ENCODE measurements at regions of chr7 and their contacts with region 1.

Region 1: DNA sequence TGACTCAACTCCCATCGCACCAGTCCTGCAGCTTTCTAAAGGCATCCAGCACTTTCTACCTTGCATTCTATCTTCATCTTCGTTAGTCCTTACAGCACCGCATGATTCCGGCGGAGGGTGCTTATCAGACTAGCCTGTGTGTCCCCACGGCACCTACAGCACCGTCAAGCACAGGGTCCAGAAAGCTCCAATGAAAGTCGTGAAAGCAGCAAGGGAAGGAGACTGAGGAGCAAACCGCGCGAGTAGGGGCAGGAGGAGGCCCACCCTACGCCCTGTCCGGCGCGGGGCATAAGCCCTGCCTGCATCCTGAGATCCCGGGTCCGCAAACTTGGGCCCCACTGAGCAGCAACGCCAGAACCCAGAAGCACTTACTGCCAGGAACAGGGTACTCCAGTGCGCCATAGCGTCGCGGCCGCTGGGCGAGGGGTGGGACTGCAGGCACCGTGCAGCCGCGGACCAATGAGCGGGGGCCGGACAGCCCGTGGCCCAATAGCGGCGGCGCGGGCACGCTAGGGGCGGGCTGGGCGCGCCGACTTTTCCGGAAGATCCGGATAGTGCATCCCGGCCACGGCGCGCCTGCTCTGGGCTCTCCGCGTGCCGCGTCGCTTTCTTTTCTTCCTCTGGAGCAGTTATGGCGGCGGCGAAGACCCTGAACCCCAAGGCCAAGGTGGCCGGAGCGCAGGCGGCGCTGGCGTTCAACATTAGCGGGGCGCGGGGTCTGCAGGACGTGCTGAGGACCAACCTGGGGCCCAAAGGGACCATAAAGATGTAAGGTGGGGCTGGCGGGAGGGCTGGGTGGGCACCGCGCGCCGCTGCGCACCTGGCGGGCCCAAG is 122.1 kb upstream of the VKORC1L1 start:
- DNase-seq: peak; percentile 76 to 91 (median 80)
- ATAC-seq: peak; percentile 99
- H3K4me3 ChIP-seq: peak overlapping the region; percentile 97
- H3K4me3 Mint-ChIP-seq: peak overlapping the region; percentile 90 to 100 (median 98)
- H3K27ac ChIP-seq: peak overlapping the region; percentile 85
- H3K27ac Mint-ChIP-seq: peak overlapping the region; percentile 75 to 95 (median 87)
- H3K4me1 ChIP-seq: peaks cover 6 to 7% of the 10 kb centered on the region in 2 donors
- H3K4me1 Mint-ChIP-seq: peaks cover 0 to 35% (median 20%) of the 10 kb centered on the region in 7 donors
- H3K27me3 ChIP-seq: no peaks in the 10 kb centered on the region
- H3K27me3 Mint-ChIP-seq: no peaks in the 10 kb centered on the region

Region 2: GRCh38 chr7:65373608-65374351 is 376.9 kb before region 1 on chr7 and contains the start of gene ZNF92:
- CTCF ChIA-PET with region 1: no interaction called
- POLR2A ChIA-PET with region 1: interaction called, 3 read pairs
- intact Hi-C with region 1: loop called (anchors 5 kb)
- DNase-seq: peak; percentile 84 to 95 (median 94)
- ATAC-seq: peak; percentile 99
- H3K4me3 ChIP-seq: peak within 1 kb of the TSS; percentile 87
- H3K4me3 Mint-ChIP-seq: peak within 1 kb of the TSS; percentile 90 to 98 (median 96)
- H3K27ac ChIP-seq: peak within 1 kb of the TSS; percentile 82
- H3K27ac Mint-ChIP-seq: peak within 1 kb of the TSS; percentile 87 to 96 (median 93)
- H3K4me1 ChIP-seq: peaks cover 8 to 21% of the 10 kb centered on the region in 2 donors
- H3K4me1 Mint-ChIP-seq: peaks cover 18 to 57% (median 49%) of the 10 kb centered on the region in 7 donors
- H3K27me3 ChIP-seq: no peaks in the 10 kb centered on the region
- H3K27me3 Mint-ChIP-seq: no peaks in the 10 kb centered on the region
- total RNA-seq, gene ZNF92: 16.3 to 22.5 (median 19.3) TPM

Region 3: GRCh38 chr7:65938336-65938895 is 187.7 kb after region 1 on chr7:
- CTCF ChIA-PET with region 1: no interaction called
- POLR2A ChIA-PET with region 1: no interaction called
- intact Hi-C with region 1: no loop called
- DNase-seq: no peak
- ATAC-seq: no peak
- H3K4me3 ChIP-seq: no peak overlapping the region
- H3K4me3 Mint-ChIP-seq: no peak overlapping the region
- H3K27ac ChIP-seq: no peak overlapping the region
- H3K27ac Mint-ChIP-seq: no peak overlapping the region
- H3K4me1 ChIP-seq: no peaks in the 10 kb centered on the region
- H3K4me1 Mint-ChIP-seq: peaks cover 0 to 8% (median 3%) of the 10 kb centered on the region in 7 donors
- H3K27me3 ChIP-seq: no peaks in the 10 kb centered on the region
- H3K27me3 Mint-ChIP-seq: no peaks in the 10 kb centered on the region

Region 4: GRCh38 chr7:66075590-66076461 is 325.1 kb after region 1 on chr7 and contains the start of gene ASL:
- CTCF ChIA-PET with region 1: no interaction called
- POLR2A ChIA-PET with region 1: no interaction called
- intact Hi-C with region 1: loop called (anchors 5 to 10 kb)
- DNase-seq: peak; percentile 71 to 96 (median 78)
- ATAC-seq: peak; percentile 99
- H3K4me3 ChIP-seq: peak within 1 kb of the TSS; percentile 83
- H3K4me3 Mint-ChIP-seq: peak within 1 kb of the TSS; percentile 80 to 96 (median 87)
- H3K27ac ChIP-seq: peak within 1 kb of the TSS; percentile 69
- H3K27ac Mint-ChIP-seq: peak within 1 kb of the TSS in 8 of 9 donors; percentile 42 to 89 (median 77)
- H3K4me1 ChIP-seq: peaks cover 6 to 7% of the 10 kb centered on the region in 2 donors
- H3K4me1 Mint-ChIP-seq: peaks cover 5 to 20% (median 19%) of the 10 kb centered on the region in 7 donors
- H3K27me3 ChIP-seq: no peaks in the 10 kb centered on the region
- H3K27me3 Mint-ChIP-seq: peaks cover 0 to 2% (median 0%) of the 10 kb centered on the region in 5 donors
- total RNA-seq, gene ASL: 11.3 to 29.7 (median 12.8) TPM

Region 5: DNA sequence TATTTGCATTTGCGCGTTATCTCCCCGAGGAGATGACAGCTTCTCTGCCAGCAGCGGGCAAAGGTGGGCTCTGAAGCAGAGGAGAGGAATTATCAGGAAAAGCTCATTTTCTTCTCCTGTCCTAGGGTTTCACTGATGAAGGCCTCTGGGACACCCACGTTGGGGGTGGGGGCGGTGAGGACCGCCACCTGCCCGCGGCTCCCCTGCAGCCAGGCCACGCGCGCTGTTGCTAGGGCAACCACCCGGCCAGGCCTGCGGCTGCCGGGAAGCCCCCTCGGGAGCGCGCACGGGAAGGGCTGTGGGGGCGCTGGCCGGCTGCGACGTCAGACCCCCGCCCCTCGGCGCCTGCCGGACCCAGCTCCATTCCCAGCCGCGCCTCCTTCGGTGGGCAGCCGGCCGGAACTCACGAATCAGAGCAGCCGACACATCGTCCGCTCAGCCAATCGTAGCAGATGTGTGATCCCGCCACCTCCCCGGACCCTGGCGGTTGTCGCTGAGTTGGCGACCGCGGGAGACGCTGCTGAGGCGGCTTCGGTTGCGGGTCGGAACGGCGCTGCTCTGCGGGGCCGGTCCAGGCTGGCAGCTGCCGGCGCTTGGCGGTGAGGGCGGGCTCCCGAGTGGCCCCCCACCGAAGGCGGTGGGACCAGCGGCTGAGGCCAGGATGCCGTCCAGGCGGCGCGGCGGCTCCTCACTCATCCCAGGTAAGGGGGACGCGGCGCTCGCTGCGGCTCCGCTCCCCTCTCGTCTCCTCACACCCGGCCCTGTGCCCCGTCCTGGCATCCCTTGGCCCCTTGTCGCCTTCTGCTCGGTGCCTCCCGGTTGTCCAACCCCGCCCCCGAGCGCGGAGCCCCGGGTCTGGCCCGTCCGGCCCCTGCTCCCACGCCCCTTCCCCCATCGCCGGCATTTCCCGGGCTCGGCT is 454.4 kb after region 1 on chr7 and contains the start of gene TPST1:
- CTCF ChIA-PET with region 1: no interaction called
- POLR2A ChIA-PET with region 1: no interaction called
- intact Hi-C with region 1: loop called in 1 of 2 experiments (anchors 10 kb)
- DNase-seq: peak; percentile 69 to 83 (median 78)
- ATAC-seq: peak; percentile 94
- H3K4me3 ChIP-seq: peak within 1 kb of the TSS; percentile 49
- H3K4me3 Mint-ChIP-seq: peak within 1 kb of the TSS; percentile 90 to 98 (median 92)
- H3K27ac ChIP-seq: peak within 1 kb of the TSS; percentile 60
- H3K27ac Mint-ChIP-seq: peak within 1 kb of the TSS in 8 of 9 donors; percentile 75 to 91 (median 83)
- H3K4me1 ChIP-seq: peaks cover 0 to 30% of the 10 kb centered on the region in 2 donors
- H3K4me1 Mint-ChIP-seq: peaks cover 26 to 57% (median 46%) of the 10 kb centered on the region in 7 donors
- H3K27me3 ChIP-seq: no peaks in the 10 kb centered on the region
- H3K27me3 Mint-ChIP-seq: peaks cover 0 to 48% (median 6%) of the 10 kb centered on the region in 5 donors
- total RNA-seq, gene TPST1: 0.70 to 5.0 (median 2.7) TPM

Region 6: DNA sequence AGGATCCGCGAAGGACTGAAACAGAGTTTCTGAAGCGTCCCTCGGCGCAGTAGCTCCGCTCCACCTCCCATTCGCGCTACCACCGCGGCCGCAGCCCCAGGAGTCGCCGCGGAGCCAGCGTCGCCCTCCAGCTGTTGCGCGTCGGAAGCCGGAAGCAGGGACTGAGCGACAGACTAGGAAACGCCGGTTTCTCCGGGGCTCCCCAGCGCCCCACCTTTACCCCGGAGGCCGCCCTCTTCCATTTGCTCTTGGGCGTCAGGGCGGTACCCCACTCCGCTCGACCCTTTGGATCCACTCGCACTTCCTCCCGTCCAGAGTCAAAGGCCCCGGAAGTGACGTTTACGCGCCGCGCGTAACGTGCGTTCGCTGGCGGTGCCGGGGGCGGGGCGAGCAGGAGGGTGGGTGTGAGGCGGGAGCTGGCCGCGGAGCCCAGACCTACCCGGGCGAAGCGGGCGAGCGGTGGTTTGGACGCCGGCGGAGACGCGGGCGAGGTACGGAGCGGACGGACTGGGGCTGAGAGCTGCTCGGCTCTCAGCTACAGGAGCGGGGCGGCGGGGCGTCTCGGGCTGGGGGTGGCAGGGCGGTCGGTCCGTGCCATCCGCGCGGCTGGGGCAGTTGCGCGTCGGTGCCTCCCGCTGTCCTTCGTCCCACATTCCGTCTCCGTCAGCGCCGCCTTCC is 989.7 kb after region 1 on chr7 and contains the start of gene RABGEF1:
- CTCF ChIA-PET with region 1: no interaction called
- POLR2A ChIA-PET with region 1: no interaction called
- intact Hi-C with region 1: loop called in 1 of 2 experiments (anchors 2 kb)
- DNase-seq: peak; percentile 94 to 98 (median 95)
- ATAC-seq: peak; percentile 95
- H3K4me3 ChIP-seq: peak within 1 kb of the TSS; percentile 82
- H3K4me3 Mint-ChIP-seq: peak within 1 kb of the TSS; percentile 89 to 98 (median 94)
- H3K27ac ChIP-seq: peak within 1 kb of the TSS; percentile 84
- H3K27ac Mint-ChIP-seq: peak within 1 kb of the TSS; percentile 94 to 98 (median 96)
- H3K4me1 ChIP-seq: peaks cover 0 to 6% of the 10 kb centered on the region in 2 donors
- H3K4me1 Mint-ChIP-seq: peaks cover 30 to 74% (median 54%) of the 10 kb centered on the region in 7 donors
- H3K27me3 ChIP-seq: no peaks in the 10 kb centered on the region
- H3K27me3 Mint-ChIP-seq: no peaks in the 10 kb centered on the region
- total RNA-seq, gene RABGEF1: 20.7 to 35.7 (median 22.2) TPM

Region 7: DNA sequence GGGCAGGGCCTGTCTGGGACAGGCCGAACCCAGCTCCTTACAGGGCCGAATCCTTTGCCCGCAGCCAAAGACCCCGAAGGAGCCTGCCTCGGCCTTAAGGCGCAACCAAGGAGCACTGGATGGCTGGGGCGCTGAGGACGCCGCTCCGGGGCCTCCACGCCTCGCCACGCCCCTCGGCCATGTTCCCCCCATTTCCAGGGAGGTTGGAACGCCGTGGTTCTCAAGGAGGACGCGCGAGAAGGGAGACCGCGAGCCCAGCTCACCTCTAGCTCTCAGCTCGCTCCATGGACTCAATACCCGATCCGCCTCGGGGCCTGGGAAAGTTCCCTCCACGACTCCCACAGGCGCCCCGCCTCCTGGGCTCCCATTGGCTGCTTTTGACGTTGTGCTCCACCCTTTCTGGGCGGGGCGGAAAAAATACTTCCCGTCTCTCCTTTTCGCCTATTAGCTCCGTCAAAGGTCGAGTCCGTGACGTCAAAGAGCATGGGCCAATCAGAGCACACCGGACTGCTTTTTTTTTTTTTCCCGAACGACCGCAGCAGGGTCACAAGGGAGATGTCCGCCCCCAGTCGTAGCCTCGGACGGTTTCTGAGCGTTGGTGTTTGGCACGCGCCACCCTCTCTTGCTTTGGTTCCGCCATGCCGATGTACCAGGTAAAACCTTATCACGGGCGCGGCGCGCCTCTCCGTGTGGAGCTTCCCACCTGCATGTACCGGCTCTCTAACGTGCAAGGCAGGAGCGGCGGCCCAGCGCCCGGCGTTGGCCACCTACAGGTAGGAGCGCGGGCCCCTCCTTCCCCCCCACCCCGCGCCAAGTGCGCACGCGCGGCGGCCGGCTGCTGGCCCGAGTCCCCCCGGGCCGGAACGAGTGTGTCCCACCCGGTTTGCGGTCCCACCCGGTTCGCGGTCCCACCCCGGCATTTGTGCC is 1551.6 kb after region 1 on chr7:
- CTCF ChIA-PET with region 1: no interaction called
- POLR2A ChIA-PET with region 1: no interaction called
- intact Hi-C with region 1: loop called (anchors 5 to 10 kb)
- DNase-seq: peak; percentile 90 to 97 (median 95)
- ATAC-seq: peak; percentile 89
- H3K4me3 ChIP-seq: peak overlapping the region; percentile 74
- H3K4me3 Mint-ChIP-seq: peak overlapping the region; percentile 89 to 99 (median 96)
- H3K27ac ChIP-seq: peak overlapping the region; percentile 88
- H3K27ac Mint-ChIP-seq: peak overlapping the region; percentile 87 to 99 (median 98)
- H3K4me1 ChIP-seq: peaks cover 3 to 7% of the 10 kb centered on the region in 2 donors
- H3K4me1 Mint-ChIP-seq: peaks cover 10 to 36% (median 25%) of the 10 kb centered on the region in 7 donors
- H3K27me3 ChIP-seq: no peaks in the 10 kb centered on the region
- H3K27me3 Mint-ChIP-seq: no peaks in the 10 kb centered on the region

Measured in naive thymus-derived CD4-positive, alpha-beta T cell (primary cell).